Dorsolateral prefrontal cortex (tissue), 120 donors: ENCODE measurements at regions of chr16 and their contacts with region 1.

Region 1: GRCh38 chr16:17416461-17417311 is 54.1 kb downstream of the XYLT1 start:
- DNase-seq: peak in 3 of 10 donors; percentile 20 to 45 (median 43)
- H3K4me3 ChIP-seq: peak overlapping the region in 43 of 59 donors; percentile 0 to 52 (median 29)
- H3K27ac ChIP-seq: peak overlapping the region in 37 of 59 donors; percentile 6 to 76 (median 55)
- H3K27me3 ChIP-seq: no peaks in the 10 kb centered on the region
- CTCF ChIP-seq: peak in 38 of 56 donors; percentile 11 to 64 (median 41)

Region 2: DNA sequence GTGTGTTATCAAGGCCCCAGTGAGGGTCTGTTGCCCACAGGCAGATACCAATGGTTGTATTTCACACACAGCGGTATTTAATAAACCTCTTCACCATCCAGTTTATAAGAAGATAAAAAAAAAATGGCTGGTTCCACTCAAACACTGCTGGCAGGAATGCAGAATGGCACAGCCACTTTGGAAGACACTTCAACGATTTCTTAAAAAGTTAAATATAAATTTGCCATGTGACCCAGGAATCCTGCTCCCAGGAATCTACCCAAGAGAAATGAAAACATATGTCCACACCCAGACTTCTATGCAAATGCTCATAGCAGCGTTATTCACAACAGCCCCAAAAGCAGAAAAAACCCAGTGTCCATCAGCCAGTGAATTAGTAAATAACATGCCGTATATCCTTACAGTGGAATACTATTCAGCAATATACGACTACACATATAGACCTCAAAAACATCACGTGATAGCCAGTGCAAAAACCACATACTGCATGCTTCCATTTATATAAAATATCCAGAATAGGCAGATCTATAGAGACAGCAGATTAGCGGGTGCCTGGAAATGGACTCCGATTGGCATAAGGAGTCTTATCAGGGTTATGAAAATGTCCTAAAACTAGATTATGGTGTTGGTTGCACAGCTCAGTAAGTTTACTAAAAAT is 15.4 kb after region 1 on chr16:
- intact Hi-C with region 1: loop called in 1 of 2 experiments (anchors 1 kb)
- DNase-seq: no peak
- H3K4me3 ChIP-seq: no peak overlapping the region
- H3K27ac ChIP-seq: no peak overlapping the region
- H3K27me3 ChIP-seq: peaks cover 0 to 3% (median 0%) of the 10 kb centered on the region in 45 donors
- CTCF ChIP-seq: no peak

Region 3: GRCh38 chr16:17451843-17452242 is 35.2 kb after region 1 on chr16:
- intact Hi-C with region 1: loop called (anchors 5 kb)
- DNase-seq: no peak
- H3K4me3 ChIP-seq: no peak overlapping the region
- H3K27ac ChIP-seq: no peak overlapping the region
- H3K27me3 ChIP-seq: no peaks in the 10 kb centered on the region
- CTCF ChIP-seq: no peak

Region 4: GRCh38 chr16:17459530-17460521 is 43.1 kb after region 1 on chr16:
- intact Hi-C with region 1: loop called in 1 of 2 experiments (anchors 5 kb)
- DNase-seq: no peak
- H3K4me3 ChIP-seq: peak overlapping the region in 3 of 59 donors; percentile 8 to 22 (median 18)
- H3K27ac ChIP-seq: peak overlapping the region in 4 of 59 donors; percentile 2 to 57 (median 8)
- H3K27me3 ChIP-seq: peaks cover 0 to 9% (median 0%) of the 10 kb centered on the region in 45 donors
- CTCF ChIP-seq: no peak